Psoas muscle (tissue), 8 donors: ENCODE measurements at regions of chr4 and their contacts with region 1.

Region 1: DNA sequence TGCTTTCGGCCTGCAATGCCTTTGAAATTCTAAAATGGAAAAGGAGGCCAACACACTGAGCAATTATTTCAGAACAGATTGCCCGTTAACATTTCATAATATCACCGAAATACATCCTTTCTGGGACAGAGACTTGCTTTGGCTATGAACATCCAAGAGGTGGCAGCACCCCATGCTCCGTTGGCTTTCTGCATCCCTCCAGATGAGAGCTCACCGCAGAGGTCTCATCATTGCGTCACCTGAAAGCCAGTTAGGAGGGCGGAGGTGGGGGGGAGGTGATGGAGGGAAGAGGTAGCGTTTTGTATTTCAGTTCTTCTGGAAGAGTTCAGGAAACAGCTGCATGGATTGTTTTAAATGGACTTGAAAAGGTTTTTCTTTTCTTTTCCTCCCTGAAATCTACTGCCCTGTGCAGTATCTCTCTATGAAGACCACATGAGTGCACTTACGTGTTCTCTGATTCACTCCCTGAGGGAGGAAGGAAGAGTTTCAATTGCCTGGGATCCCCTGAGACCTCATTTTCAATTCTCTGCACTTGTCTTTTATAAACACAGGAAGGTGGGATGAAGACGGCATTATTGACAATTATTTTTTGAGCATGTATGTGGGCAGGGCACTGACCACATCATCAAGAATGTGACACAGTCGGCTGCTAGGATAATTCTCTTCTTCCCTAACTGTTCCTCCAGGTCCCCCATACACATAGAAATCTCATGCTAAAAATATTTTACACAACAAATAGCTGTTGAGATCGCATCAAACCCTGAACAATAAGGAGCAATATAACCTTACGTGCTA is 166.9 kb upstream of the PGRMC2 start:
- DNase-seq: peak; percentile 84 to 87
- ATAC-seq: peak; percentile 82 to 92 (median 88)
- H3K4me3 ChIP-seq: no peak overlapping the region
- H3K27ac ChIP-seq: peak overlapping the region; percentile 13
- H3K4me1 ChIP-seq: peaks cover 39% of the 10 kb centered on the region
- H3K27me3 ChIP-seq: no peaks in the 10 kb centered on the region
- CTCF ChIP-seq: peak; percentile 81

Region 2: GRCh38 chr4:128191115-128191781 is 263.2 kb before region 1 on chr4:
- intact Hi-C with region 1: loop called in 1 of 2 experiments (anchors 10 kb)
- DNase-seq: peak; percentile 40 to 66
- ATAC-seq: peak; percentile 85 to 96 (median 89)
- H3K4me3 ChIP-seq: no peak overlapping the region
- H3K27ac ChIP-seq: no peak overlapping the region
- H3K4me1 ChIP-seq: no peaks in the 10 kb centered on the region
- H3K27me3 ChIP-seq: no peaks in the 10 kb centered on the region
- CTCF ChIP-seq: peak; percentile 83

Region 3: GRCh38 chr4:128553686-128554515 is 99.4 kb after region 1 on chr4:
- intact Hi-C with region 1: loop called (anchors 5 to 10 kb)
- DNase-seq: no peak
- ATAC-seq: peak in 3 of 4 donors; percentile 18 to 39 (median 29)
- H3K4me3 ChIP-seq: peak overlapping the region; percentile 82
- H3K27ac ChIP-seq: peak overlapping the region; percentile 98
- H3K4me1 ChIP-seq: peaks cover 15% of the 10 kb centered on the region
- H3K27me3 ChIP-seq: no peaks in the 10 kb centered on the region
- CTCF ChIP-seq: no peak

Region 4: GRCh38 chr4:128663336-128663735 is 208.9 kb after region 1 on chr4:
- intact Hi-C with region 1: loop called in 1 of 2 experiments (anchors 10 kb)
- DNase-seq: no peak
- ATAC-seq: no peak
- H3K4me3 ChIP-seq: no peak overlapping the region
- H3K27ac ChIP-seq: no peak overlapping the region
- H3K4me1 ChIP-seq: peaks cover 3% of the 10 kb centered on the region
- H3K27me3 ChIP-seq: no peaks in the 10 kb centered on the region
- CTCF ChIP-seq: no peak

Region 5: DNA sequence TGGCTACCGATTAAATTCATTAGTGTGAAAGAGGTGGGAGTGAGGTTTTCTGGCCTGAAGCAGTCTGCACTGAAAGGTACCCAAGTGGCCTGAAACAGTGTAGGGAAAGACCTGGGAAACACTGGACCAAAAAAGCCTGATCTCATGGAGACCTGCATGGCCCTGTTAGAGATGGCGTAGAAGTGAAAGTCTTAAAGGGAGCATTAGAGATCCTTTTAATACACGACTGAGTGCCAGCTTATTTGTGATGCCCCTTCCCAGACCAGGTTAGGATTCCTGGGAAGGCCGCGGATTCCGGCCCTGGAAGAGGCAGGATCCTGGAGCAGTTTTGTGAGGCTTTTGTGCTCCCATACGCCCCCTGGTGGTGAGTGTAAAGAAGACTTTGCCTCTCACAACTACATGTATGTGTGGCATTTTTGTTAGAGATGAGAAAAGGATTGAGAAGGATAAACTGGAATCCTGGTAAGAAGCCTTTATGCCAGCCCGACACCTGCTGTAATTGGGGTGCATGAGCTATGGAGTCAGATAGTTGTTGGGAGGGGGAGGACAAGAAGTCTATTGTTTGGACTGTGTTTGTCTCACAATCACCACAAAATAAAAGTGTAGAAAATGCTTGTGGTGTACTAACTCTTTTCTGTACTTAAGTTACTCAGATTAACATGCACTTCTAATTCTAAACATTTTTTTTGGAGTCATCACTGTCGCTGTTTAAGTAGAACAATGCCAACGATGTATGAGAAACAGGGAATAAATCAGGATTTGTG is 409.0 kb after region 1 on chr4:
- intact Hi-C with region 1: loop called (anchors 5 to 10 kb)
- DNase-seq: peak; percentile 77 to 84
- ATAC-seq: peak; percentile 67 to 88 (median 72)
- H3K4me3 ChIP-seq: no peak overlapping the region
- H3K27ac ChIP-seq: no peak overlapping the region
- H3K4me1 ChIP-seq: peaks cover 17% of the 10 kb centered on the region
- H3K27me3 ChIP-seq: no peaks in the 10 kb centered on the region
- CTCF ChIP-seq: peak; percentile 92